A549 (cell line): ENCODE measurements at regions of chr10 and their contacts with region 1.

Region 1: DNA sequence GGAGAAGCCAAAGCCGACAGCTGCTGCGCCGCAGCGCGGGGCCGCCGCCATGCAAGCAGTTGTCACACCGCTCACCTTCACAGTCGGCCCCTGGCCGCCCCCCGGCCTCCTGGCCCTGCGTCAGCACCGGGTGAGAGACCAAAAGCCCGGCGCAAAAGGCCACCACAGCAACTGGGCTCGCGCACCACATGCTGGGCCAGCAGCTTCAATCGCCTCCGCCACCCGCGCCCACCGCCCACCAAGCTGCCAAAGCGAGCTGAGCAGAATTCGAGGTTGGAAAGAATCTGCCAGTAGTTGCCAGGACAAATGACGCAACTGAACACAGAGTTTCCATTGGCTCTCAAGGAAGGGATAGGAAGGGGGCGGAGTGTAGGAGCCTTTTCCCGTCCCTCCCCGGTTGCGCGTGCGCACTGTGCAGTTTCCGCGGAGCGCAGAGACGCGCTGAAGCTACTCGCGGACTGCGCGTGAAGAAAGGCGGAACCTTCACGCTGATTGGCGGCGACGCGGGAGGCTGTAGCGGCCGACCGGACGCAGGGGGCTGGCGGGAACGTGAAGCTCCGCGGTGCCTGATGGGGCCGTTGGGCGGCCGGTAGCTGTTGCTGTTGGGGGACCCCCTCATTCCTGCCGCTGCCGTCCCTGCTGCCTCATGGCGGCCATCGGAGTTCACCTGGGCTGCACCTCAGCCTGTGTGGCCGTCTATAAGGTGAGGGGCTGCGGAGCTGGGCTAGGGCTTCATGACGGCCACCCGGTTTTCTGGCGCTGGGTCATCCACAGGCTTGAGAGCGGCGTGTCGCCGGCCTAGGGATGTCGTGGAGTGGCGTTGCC is at the starts of genes CDNF, HSPA14 and MSANTD7:
- DNase-seq: peak; percentile 97 to 99
- ATAC-seq: peak; percentile 98
- H3K4me3 ChIP-seq: peak within 1 kb of the TSS; percentile 90
- H3K27ac ChIP-seq: peak within 1 kb of the TSS; percentile 86 to 94
- H3K4me1 ChIP-seq: peaks cover 8% of the 10 kb centered on the region; the same call in 1 of the 3 replicates
- CTCF ChIP-seq: no peak
- EP300 ChIP-seq: no peak
- POLR2A ChIP-seq: peak; percentile 86
- RAD21 ChIP-seq: no peak; a peak in 1 of 5 replicates
- polyA plus RNA-seq, gene CDNF: 1.8 and 2.0 TPM in 2 replicates
- polyA plus RNA-seq, gene HSPA14: 31.7 and 45.7 TPM in 2 replicates
- polyA plus RNA-seq, gene MSANTD7: 10.9 and 11.2 TPM in 2 replicates

Region 2: GRCh38 chr10:14500172-14500765 is 337.7 kb before region 1 on chr10:
- CTCF ChIA-PET with region 1: interaction called, 19 read pairs
- POLR2A ChIA-PET with region 1: no interaction called
- DNase-seq: peak in 1 of 2 experiments; percentile 11
- ATAC-seq: no peak
- H3K4me3 ChIP-seq: no peak overlapping the region
- H3K27ac ChIP-seq: peak overlapping the region in 1 of 2 experiments; percentile 69; a peak in 1 of 6 replicates
- H3K4me1 ChIP-seq: peaks cover 6% of the 10 kb centered on the region
- CTCF ChIP-seq: no peak
- EP300 ChIP-seq: no peak
- POLR2A ChIP-seq: no peak
- RAD21 ChIP-seq: no peak

Region 3: GRCh38 chr10:14959276-14960057 is 121.5 kb after region 1 on chr10 and contains the start of gene MEIG1:
- CTCF ChIA-PET with region 1: no interaction called
- POLR2A ChIA-PET with region 1: interaction called, 12 read pairs
- DNase-seq: peak; percentile 95 to 96
- ATAC-seq: peak; percentile 96
- H3K4me3 ChIP-seq: peak within 1 kb of the TSS; percentile 56
- H3K27ac ChIP-seq: peak within 1 kb of the TSS; percentile 88 to 97
- H3K4me1 ChIP-seq: peaks cover 5% of the 10 kb centered on the region; the same call in 1 of the 3 replicates
- CTCF ChIP-seq: no peak
- EP300 ChIP-seq: no peak
- POLR2A ChIP-seq: peak; percentile 48
- RAD21 ChIP-seq: no peak
- polyA plus RNA-seq, gene MEIG1: 0.79 and 1.1 TPM in 2 replicates